Heart left ventricle (tissue), 16 donors: ENCODE measurements at regions of chr9 and their contacts with region 1.

Region 1: GRCh38 chr9:72280913-72281500 is 84.0 kb downstream of the ZFAND5 start:
- DNase-seq: peak; percentile 60 to 80 (median 66)
- ATAC-seq: peak; percentile 86 to 90 (median 88)
- H3K4me3 ChIP-seq: no peak overlapping the region
- H3K27ac ChIP-seq: no peak overlapping the region
- H3K4me1 ChIP-seq: no peaks in the 10 kb centered on the region
- H3K27me3 ChIP-seq: no peaks in the 10 kb centered on the region
- CTCF ChIP-seq: peak; percentile 85 to 98 (median 90)
- POLR2A ChIP-seq: no peak

Region 2: GRCh38 chr9:72753266-72753893 is 472.4 kb after region 1 on chr9:
- intact Hi-C with region 1: loop called in 2 of 10 experiments (anchors 10 kb)
- DNase-seq: no peak
- ATAC-seq: no peak
- H3K4me3 ChIP-seq: no peak overlapping the region
- H3K27ac ChIP-seq: no peak overlapping the region
- H3K4me1 ChIP-seq: no peaks in the 10 kb centered on the region
- H3K27me3 ChIP-seq: peaks cover 0 to 4% (median 0%) of the 10 kb centered on the region in 9 donors
- CTCF ChIP-seq: peak in 5 of 12 donors; percentile 11 to 33 (median 31)
- POLR2A ChIP-seq: no peak

Region 3: DNA sequence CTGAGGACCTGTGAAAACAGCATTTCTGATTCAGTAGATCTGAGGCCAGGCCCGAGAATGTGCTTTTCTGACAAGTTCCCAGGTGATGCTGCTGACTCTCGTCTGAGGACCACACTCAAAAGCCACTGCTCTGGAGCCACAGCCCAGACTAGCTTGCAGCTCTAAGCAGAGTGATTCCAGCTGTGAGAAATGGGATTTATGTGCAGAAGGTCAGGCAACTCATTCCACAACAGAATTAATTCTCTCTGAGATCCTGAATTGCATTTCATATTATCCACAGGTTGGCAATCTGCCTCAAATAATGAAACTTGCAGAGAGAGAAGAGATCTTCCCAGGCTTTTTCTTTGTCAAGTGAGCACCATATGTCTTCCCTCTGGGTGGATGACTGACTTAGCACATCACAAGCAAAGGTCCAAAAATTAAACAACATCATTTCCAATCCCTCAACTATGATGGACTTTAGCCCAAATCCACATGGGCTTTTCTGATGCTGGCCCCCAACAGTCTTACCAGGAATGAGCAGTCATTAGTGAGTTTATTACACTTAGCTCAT is 531.6 kb after region 1 on chr9:
- intact Hi-C with region 1: loop called in 1 of 10 experiments (anchors 5 kb)
- DNase-seq: peak in 1 of 5 donors; percentile 27
- ATAC-seq: peak in 1 of 4 donors; percentile 52
- H3K4me3 ChIP-seq: no peak overlapping the region
- H3K27ac ChIP-seq: no peak overlapping the region
- H3K4me1 ChIP-seq: peaks cover 0 to 3% (median 0%) of the 10 kb centered on the region in 12 donors
- H3K27me3 ChIP-seq: no peaks in the 10 kb centered on the region
- CTCF ChIP-seq: no peak
- POLR2A ChIP-seq: no peak